Activated CD4-positive, alpha-beta T cell treated with anti-CD3 and anti-CD28 coated beads, Interleukin-2, amount 10 ng/mL, durations not matched to agents 24 days and 14 days (primary cell): ENCODE measurements at regions of chr12 and their contacts with region 1.

Region 1: GRCh38 chr12:69070319-69071090 is 137.5 kb upstream of the CPM start:
- DNase-seq: peak; percentile 88
- H3K4me3 Mint-ChIP-seq: no peak overlapping the region
- H3K27ac Mint-ChIP-seq: no peak overlapping the region
- H3K4me1 Mint-ChIP-seq: peaks cover 19% of the 10 kb centered on the region
- H3K27me3 Mint-ChIP-seq: peaks cover 11% of the 10 kb centered on the region

Region 2: GRCh38 chr12:68831272-68831671 is 239.2 kb before region 1 on chr12:
- intact Hi-C with region 1: loop called (anchors 1 kb)
- DNase-seq: peak; percentile 52
- H3K4me3 Mint-ChIP-seq: no peak overlapping the region
- H3K27ac Mint-ChIP-seq: no peak overlapping the region
- H3K4me1 Mint-ChIP-seq: peaks cover 19% of the 10 kb centered on the region
- H3K27me3 Mint-ChIP-seq: no peaks in the 10 kb centered on the region

Region 3: DNA sequence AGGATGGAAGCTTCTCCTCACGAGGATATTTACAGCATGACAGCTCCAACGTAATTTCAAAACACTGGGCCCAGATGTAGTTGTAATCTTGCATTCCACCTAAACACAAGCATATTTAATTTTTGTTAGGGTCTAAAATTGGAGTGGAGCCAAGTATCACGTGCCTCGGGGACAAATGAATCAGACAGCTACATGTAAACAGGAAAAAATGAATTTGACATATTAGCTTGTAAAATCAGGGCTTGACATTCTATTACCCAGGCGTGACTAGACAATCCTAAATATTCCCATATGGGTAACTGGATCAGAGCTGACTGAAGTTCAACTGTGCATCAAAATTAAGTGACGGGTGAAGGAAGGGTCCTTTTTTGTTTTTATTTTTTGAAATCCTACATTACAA is 203.6 kb before region 1 on chr12:
- intact Hi-C with region 1: loop called (anchors 1 kb)
- DNase-seq: no peak
- H3K4me3 Mint-ChIP-seq: no peak overlapping the region
- H3K27ac Mint-ChIP-seq: no peak overlapping the region
- H3K4me1 Mint-ChIP-seq: peaks cover 19% of the 10 kb centered on the region
- H3K27me3 Mint-ChIP-seq: no peaks in the 10 kb centered on the region

Region 4: GRCh38 chr12:68932961-68933893 is 137.3 kb before region 1 on chr12 and contains the start of gene CPM:
- intact Hi-C with region 1: loop called (anchors 1 kb)
- DNase-seq: peak; percentile 96
- H3K4me3 Mint-ChIP-seq: peak within 1 kb of the TSS; percentile 94
- H3K27ac Mint-ChIP-seq: peak within 1 kb of the TSS; percentile 85
- H3K4me1 Mint-ChIP-seq: peaks cover 19% of the 10 kb centered on the region
- H3K27me3 Mint-ChIP-seq: peaks cover 2% of the 10 kb centered on the region
- total RNA-seq, gene CPM: 63.5 and 76.5 TPM in 2 replicates

Region 5: DNA sequence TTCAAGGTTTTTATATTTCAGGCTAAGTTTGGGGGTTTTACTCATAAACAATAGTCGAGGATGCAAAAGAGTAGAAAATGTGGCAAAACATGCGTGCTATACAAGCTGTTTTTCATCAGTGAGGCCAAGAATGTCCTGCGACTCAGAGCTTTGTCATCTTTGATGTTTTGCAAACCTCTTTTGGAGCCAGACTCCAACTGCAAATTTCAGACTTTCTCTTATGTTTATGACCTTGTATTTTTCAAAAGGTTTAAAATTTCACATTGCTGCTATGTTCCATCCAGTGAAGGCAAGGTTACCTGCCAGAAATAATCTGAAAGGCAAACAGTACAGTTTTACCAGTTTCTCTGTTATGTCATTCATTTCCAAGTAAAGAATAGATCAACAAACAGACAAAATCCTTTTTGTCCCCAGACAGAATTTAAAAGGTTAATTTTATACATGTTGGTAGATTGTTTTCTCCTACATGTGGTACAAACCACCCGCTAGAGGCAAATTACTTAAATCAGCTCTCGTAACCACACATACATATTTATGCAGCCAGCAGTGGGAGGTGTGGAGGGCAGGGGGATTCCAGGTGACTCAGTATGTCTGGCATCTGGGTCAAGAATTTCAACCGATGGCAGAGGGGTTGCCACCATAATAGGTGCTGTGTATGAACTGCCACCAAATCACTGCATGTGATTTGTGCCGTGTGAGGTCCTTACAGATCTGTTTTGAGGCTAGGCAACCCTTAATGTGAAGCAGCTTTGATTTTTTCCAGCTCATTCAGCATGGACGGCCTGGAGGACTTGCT is 17.7 kb before region 1 on chr12:
- intact Hi-C with region 1: loop called (anchors 2 kb)
- DNase-seq: peak; percentile 67
- H3K4me3 Mint-ChIP-seq: peak overlapping the region; percentile 7
- H3K27ac Mint-ChIP-seq: peak overlapping the region; percentile 30
- H3K4me1 Mint-ChIP-seq: peaks cover 18% of the 10 kb centered on the region
- H3K27me3 Mint-ChIP-seq: no peaks in the 10 kb centered on the region

Region 6: DNA sequence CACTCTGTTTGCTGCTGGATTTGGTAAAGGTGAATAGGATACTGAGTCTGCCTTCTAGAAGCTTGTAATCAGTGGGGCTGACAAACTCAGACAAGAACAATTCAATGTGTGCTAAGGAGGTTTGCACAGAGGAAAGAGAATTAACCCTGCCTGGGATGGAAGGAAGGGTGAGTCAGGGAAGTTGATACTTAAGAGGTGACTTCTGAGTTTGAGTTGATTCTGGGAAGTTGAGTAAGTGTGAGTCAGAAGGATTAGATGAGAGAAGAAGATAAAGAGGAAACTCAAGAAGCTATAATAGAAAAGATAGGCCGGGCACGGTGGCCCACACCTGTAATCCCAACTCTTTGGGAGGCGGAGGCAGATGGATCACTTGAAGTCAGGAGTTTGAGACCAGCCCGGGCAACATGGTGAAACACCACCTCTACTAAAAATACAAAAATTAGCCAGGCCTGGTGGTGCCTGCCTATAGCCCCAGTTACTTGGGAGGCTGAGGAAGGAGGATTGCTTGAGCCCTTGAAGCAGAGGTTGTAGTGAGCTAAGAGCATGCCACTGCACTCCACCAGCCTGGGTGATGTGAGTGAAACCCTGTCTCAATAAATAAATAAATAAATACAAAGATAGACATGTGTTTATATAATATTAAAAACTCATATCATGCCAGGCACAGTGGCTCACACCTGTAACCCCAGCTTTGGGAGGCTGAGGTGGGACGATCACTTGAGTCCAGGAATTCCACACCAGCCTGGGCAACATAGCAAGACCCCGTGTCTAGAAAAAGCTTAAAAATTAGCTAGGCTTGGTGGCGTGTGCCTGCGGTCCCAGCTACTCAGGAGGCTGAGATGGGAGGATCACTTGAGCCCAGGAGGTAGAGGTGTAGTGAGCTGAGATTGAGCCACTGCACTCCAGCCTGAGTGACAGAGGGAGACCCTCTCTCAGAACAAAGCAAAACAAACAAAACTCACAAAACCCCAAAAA is 10.7 kb before region 1 on chr12:
- intact Hi-C with region 1: loop called (anchors 1 kb)
- DNase-seq: no peak
- H3K4me3 Mint-ChIP-seq: peak overlapping the region; percentile 27
- H3K27ac Mint-ChIP-seq: peak overlapping the region; percentile 73
- H3K4me1 Mint-ChIP-seq: peaks cover 29% of the 10 kb centered on the region
- H3K27me3 Mint-ChIP-seq: no peaks in the 10 kb centered on the region

Region 7: GRCh38 chr12:69254046-69254445 is 183.5 kb after region 1 on chr12:
- intact Hi-C with region 1: loop called (anchors 2 kb)
- DNase-seq: peak; percentile 77
- H3K4me3 Mint-ChIP-seq: no peak overlapping the region
- H3K27ac Mint-ChIP-seq: peak overlapping the region; percentile 43
- H3K4me1 Mint-ChIP-seq: peaks cover 27% of the 10 kb centered on the region
- H3K27me3 Mint-ChIP-seq: no peaks in the 10 kb centered on the region

Region 8: GRCh38 chr12:69388371-69388770 is 317.9 kb after region 1 on chr12:
- intact Hi-C with region 1: no loop called
- DNase-seq: no peak
- H3K4me3 Mint-ChIP-seq: no peak overlapping the region
- H3K27ac Mint-ChIP-seq: no peak overlapping the region
- H3K4me1 Mint-ChIP-seq: peaks cover 13% of the 10 kb centered on the region
- H3K27me3 Mint-ChIP-seq: no peaks in the 10 kb centered on the region